SK-N-SH (cell line): ENCODE measurements at regions of chr5 and their contacts with region 1.

Region 1: GRCh38 chr5:147822686-147823491 is 8.6 kb downstream of the SPINK1 start:
- DNase-seq: peak; percentile 48
- H3K4me3 ChIP-seq: peak overlapping the region in 1 of 2 experiments; percentile 42; a peak in 1 of 4 replicates
- H3K27ac ChIP-seq: no peak overlapping the region
- H3K4me1 ChIP-seq: peaks cover 0 to 8% of the 10 kb centered on the region in 2 experiments; a peak in 1 of 4 replicates
- H3K27me3 ChIP-seq: no peaks in the 10 kb centered on the region
- CTCF ChIP-seq: peak; percentile 99
- EP300 ChIP-seq: no peak
- RAD21 ChIP-seq: peak; percentile 100

Region 2: DNA sequence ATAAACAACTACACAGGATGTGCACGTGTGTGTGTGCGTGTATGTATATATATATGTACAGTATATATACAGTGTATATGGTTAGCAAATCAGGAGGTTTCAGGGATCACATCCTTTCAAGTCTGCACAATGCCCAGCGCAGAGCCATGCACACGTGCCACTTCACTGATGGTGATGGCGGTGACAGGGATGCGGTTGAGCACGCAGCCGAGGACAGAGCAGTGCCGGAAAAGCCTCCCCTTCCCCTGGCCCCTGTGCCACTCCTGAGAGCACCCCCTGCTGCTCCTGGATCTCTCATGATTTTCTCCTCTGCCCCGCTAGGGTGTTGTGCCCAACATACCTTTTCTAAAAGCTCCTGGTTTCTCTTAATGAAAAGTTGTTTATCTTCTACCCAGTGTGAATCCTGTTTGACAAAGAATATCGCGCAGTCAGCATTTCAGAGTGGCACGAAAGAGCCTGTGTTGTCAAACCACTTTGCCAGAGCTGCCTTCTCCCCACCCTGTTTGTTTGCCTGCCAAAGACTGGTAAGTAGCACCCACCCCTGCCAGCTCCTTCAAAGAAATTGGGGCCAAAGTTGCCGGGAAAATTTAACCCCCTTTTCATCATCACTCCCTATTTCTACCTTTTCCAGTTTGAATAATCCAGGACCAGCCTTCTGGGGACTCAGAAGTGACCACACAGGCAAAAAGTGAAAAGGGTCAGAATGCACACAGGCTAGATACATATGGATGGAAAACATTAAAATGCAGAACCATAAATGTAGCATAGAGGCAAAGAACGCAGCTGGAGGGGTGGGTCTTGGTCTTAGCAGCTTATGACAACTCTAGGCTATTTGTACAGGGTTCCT is 186.8 kb before region 1 on chr5:
- CTCF ChIA-PET with region 1: interaction called, 257 read pairs
- POLR2A ChIA-PET with region 1: no interaction called
- DNase-seq: no peak
- H3K4me3 ChIP-seq: no peak overlapping the region
- H3K27ac ChIP-seq: no peak overlapping the region
- H3K4me1 ChIP-seq: peaks cover 0 to 9% of the 10 kb centered on the region in 2 experiments; a peak in 1 of 4 replicates
- H3K27me3 ChIP-seq: no peaks in the 10 kb centered on the region
- CTCF ChIP-seq: no peak
- EP300 ChIP-seq: no peak
- RAD21 ChIP-seq: no peak

Region 3: GRCh38 chr5:147658293-147658932 is 164.5 kb before region 1 on chr5:
- CTCF ChIA-PET with region 1: interaction called, 12 read pairs
- POLR2A ChIA-PET with region 1: no interaction called
- DNase-seq: no peak
- H3K4me3 ChIP-seq: no peak overlapping the region
- H3K27ac ChIP-seq: no peak overlapping the region
- H3K4me1 ChIP-seq: no peaks in the 10 kb centered on the region
- H3K27me3 ChIP-seq: no peaks in the 10 kb centered on the region
- CTCF ChIP-seq: no peak
- EP300 ChIP-seq: no peak
- RAD21 ChIP-seq: no peak

Region 4: GRCh38 chr5:147740864-147741263 is 82.0 kb before region 1 on chr5:
- CTCF ChIA-PET with region 1: interaction called, 12 read pairs
- POLR2A ChIA-PET with region 1: no interaction called
- DNase-seq: no peak
- H3K4me3 ChIP-seq: no peak overlapping the region
- H3K27ac ChIP-seq: no peak overlapping the region
- H3K4me1 ChIP-seq: peaks cover 0 to 38% of the 10 kb centered on the region in 2 experiments; a peak in 3 of 4 replicates
- H3K27me3 ChIP-seq: no peaks in the 10 kb centered on the region
- CTCF ChIP-seq: no peak
- EP300 ChIP-seq: no peak
- RAD21 ChIP-seq: no peak

Region 5: DNA sequence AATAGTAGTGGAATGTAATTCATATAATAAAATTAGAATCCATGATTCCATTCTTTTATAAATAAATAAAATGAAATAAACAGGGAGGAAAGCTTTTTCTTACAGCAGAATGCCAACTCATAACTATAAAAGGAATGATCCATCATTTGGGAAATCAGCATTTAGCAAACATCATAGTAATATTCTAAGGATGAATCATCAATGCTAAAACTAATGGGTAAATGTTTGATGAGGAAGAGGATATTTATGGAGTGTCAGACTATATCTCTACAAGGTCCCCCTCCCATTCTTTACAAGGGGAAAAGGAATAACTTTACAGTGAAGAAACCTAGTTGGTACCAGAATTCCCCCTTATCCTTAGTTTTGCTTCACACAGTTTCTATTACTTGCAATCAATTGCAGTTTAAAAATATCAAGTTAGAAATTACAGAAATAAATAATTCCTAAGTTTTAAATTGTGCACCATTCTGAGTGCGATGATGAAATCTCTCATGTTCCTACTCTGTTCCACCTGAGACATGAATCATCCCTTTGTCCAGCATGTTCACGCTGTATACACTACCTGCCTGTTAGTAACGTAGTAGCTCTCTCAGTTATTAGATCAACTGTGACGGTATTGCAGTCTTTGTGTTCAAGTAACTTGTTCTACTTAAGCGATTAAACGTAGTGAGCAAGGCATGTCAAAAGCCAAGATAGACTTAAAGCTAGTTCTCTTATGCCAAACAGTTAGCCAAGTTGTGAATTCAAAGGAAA is 26.2 kb before region 1 on chr5:
- CTCF ChIA-PET with region 1: interaction called, 11 read pairs
- POLR2A ChIA-PET with region 1: no interaction called
- DNase-seq: no peak
- H3K4me3 ChIP-seq: no peak overlapping the region
- H3K27ac ChIP-seq: no peak overlapping the region
- H3K4me1 ChIP-seq: no peaks in the 10 kb centered on the region
- H3K27me3 ChIP-seq: no peaks in the 10 kb centered on the region
- CTCF ChIP-seq: no peak
- EP300 ChIP-seq: no peak
- RAD21 ChIP-seq: no peak

Region 6: DNA sequence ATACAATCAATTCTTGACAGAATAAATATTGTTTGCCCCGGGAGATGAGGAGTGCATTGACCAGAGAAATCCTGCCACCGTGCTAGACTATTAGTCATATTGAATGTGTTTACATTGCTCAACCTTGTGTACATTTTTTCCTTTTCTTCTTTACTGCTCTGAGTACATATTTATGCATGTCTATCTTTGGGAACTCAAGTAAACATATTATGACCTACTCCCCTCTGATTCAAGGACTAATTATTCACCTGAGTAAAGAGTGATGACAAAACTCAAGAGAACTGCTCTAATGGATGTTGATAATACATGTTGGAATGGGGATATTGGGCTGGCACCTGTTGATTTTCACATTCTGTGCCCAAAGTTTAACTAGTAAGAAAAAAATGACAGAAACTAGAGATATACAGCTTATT is 12.5 kb after region 1 on chr5:
- CTCF ChIA-PET with region 1: interaction called, 35 read pairs
- POLR2A ChIA-PET with region 1: no interaction called
- DNase-seq: no peak
- H3K4me3 ChIP-seq: no peak overlapping the region
- H3K27ac ChIP-seq: no peak overlapping the region
- H3K4me1 ChIP-seq: no peaks in the 10 kb centered on the region; a peak in 1 of 4 replicates
- H3K27me3 ChIP-seq: no peaks in the 10 kb centered on the region
- CTCF ChIP-seq: no peak
- EP300 ChIP-seq: no peak
- RAD21 ChIP-seq: no peak

Region 7: GRCh38 chr5:147887024-147887627 is 64.2 kb after region 1 on chr5:
- CTCF ChIA-PET with region 1: interaction called, 11 read pairs
- POLR2A ChIA-PET with region 1: no interaction called
- DNase-seq: peak; percentile 3
- H3K4me3 ChIP-seq: no peak overlapping the region; a peak in 1 of 4 replicates
- H3K27ac ChIP-seq: no peak overlapping the region; a peak in 1 of 4 replicates
- H3K4me1 ChIP-seq: no peaks in the 10 kb centered on the region; a peak in 1 of 4 replicates
- H3K27me3 ChIP-seq: no peaks in the 10 kb centered on the region
- CTCF ChIP-seq: peak; percentile 87
- EP300 ChIP-seq: no peak
- RAD21 ChIP-seq: peak; percentile 69

Region 8: GRCh38 chr5:148060309-148060708 is 237.4 kb after region 1 on chr5:
- CTCF ChIA-PET with region 1: no interaction called
- POLR2A ChIA-PET with region 1: no interaction called
- DNase-seq: no peak
- H3K4me3 ChIP-seq: no peak overlapping the region
- H3K27ac ChIP-seq: no peak overlapping the region
- H3K4me1 ChIP-seq: no peaks in the 10 kb centered on the region
- H3K27me3 ChIP-seq: no peaks in the 10 kb centered on the region; the same call in 1 of the 2 replicates
- CTCF ChIP-seq: no peak
- EP300 ChIP-seq: no peak
- RAD21 ChIP-seq: no peak